Aorta (tissue), 5 donors: ENCODE measurements at regions of chr13 and their contacts with region 1.

Region 1: DNA sequence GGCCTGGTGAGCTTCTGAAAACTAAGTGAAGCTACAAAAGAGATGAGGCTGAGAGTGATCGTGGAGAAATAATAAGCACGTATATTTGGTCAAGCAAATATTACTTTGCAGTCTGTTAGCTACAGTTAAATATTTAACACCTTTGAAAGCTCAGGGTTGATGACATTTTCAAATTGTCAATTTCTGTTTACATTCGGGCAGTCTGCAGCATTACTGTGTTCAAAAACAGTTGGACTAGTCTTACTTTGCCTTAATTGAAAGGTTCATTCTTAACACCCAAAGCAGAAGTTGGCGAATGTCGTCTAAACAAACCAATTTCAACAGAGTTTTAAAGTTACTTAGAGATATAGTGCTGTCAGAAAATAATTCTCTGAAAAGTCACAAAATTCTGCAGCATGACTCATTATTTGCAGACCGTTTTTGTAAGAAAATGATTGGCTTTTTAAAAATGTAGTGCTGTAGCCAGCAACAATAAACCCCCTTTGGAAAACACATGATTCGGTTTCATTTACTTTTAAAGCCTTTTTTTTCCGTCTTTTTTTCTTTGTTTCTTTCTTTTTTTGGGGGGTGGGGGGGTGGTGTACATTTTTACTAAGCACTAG is 549.0 kb downstream of the GPC6 start:
- DNase-seq: no peak
- ATAC-seq: no peak
- H3K4me3 ChIP-seq: peak overlapping the region in 1 of 2 donors; percentile 26
- H3K27ac ChIP-seq: peak overlapping the region in 1 of 2 donors; percentile 36
- H3K4me1 ChIP-seq: peaks cover 3 to 13% of the 10 kb centered on the region in 2 donors
- H3K27me3 ChIP-seq: no peaks in the 10 kb centered on the region

Region 2: GRCh38 chr13:93248627-93249047 is 527.0 kb before region 1 on chr13:
- intact Hi-C with region 1: loop called in 1 of 2 experiments (anchors 10 kb)
- DNase-seq: peak; percentile 50 to 80
- ATAC-seq: peak; percentile 44
- H3K4me3 ChIP-seq: no peak overlapping the region
- H3K27ac ChIP-seq: no peak overlapping the region
- H3K4me1 ChIP-seq: no peaks in the 10 kb centered on the region
- H3K27me3 ChIP-seq: no peaks in the 10 kb centered on the region

Region 3: GRCh38 chr13:93466502-93467036 is 309.0 kb before region 1 on chr13:
- intact Hi-C with region 1: no loop called
- DNase-seq: no peak
- ATAC-seq: no peak
- H3K4me3 ChIP-seq: no peak overlapping the region
- H3K27ac ChIP-seq: no peak overlapping the region
- H3K4me1 ChIP-seq: no peaks in the 10 kb centered on the region
- H3K27me3 ChIP-seq: no peaks in the 10 kb centered on the region

Region 4: GRCh38 chr13:93915269-93915809 is 139.7 kb after region 1 on chr13:
- intact Hi-C with region 1: no loop called
- DNase-seq: no peak
- ATAC-seq: no peak
- H3K4me3 ChIP-seq: no peak overlapping the region
- H3K27ac ChIP-seq: no peak overlapping the region
- H3K4me1 ChIP-seq: peaks cover 0 to 4% of the 10 kb centered on the region in 2 donors
- H3K27me3 ChIP-seq: no peaks in the 10 kb centered on the region